ENCODE measurements at regions of chr7 and their contacts with region 1.

Region 1: GRCh38 chr7:131688738-131689661 is 132.6 kb upstream of the PODXL start:
- DNase-seq: peak in 1 of 2 donors; percentile 28
- H3K4me3 ChIP-seq: no peak overlapping the region
- H3K27ac ChIP-seq: no peak overlapping the region
- H3K4me1 ChIP-seq: no peaks in the 10 kb centered on the region
- H3K27me3 ChIP-seq: peaks cover 0 to 36% of the 10 kb centered on the region in 2 donors
- CTCF ChIP-seq: peak; percentile 64 to 89 (median 88)
- POLR2A ChIP-seq: no peak

Region 2: DNA sequence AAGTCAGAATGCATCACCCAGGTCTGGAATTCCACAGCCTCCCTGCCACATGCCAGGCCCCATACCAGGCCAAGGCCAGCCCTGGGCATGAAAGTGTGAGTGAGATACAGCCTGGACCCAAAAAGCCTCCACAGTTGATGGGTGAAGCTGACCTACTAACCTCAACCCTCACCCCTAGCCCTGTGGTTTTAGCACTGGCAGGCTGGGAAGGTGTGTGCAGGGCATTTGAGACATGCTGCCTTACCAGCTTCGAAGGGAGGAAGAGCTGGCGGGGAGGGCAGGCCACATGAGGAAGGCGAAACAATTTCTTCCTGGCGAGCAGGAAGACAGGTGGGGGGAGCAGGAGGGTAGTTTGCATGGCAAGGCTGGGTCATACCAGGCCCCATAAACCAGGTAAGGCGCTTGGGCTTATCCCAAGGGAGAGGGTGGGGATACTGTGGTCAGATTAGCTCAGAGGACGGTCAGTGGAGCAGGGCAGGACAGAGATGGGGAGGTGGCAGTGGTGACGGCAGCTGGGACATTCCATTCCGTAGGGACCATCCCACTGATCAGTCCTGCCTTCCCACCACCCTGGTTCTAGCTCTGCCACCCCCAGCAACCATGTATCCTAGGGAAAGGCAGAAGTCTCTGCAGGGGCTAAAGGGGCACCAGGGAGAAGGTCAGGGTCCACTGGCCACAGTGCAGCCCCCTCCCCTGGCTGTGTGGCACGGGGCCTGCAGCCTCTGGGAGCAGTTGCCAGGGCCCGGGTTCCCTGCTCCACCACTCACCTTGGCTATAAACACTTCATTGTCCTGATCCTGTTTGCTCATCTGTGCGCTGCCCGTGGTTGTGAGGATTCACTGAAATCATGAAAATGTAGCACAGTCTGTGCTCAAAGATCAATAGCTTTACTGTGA is 1921.6 kb before region 1 on chr7:
- intact Hi-C with region 1: loop called (anchors 10 kb)
- DNase-seq: no peak
- H3K4me3 ChIP-seq: no peak overlapping the region
- H3K27ac ChIP-seq: no peak overlapping the region
- H3K4me1 ChIP-seq: no peaks in the 10 kb centered on the region
- H3K27me3 ChIP-seq: no peaks in the 10 kb centered on the region
- CTCF ChIP-seq: no peak
- POLR2A ChIP-seq: no peak

Measured in breast epithelium (tissue), 4 donors.